B cell (primary cell): ENCODE measurements at regions of chr1 and their contacts with region 1.

Region 1: GRCh38 chr1:174800216-174800851 is 199.4 kb upstream of the CACYBP start:
- DNase-seq: no peak
- ATAC-seq: no peak
- H3K4me3 ChIP-seq: peak overlapping the region; percentile 65 to 97 (median 68)
- H3K4me3 Mint-ChIP-seq: no peak overlapping the region
- H3K27ac ChIP-seq: peak overlapping the region; percentile 78 to 88
- H3K27ac Mint-ChIP-seq: no peak overlapping the region
- H3K4me1 ChIP-seq: peaks cover 14 to 17% of the 10 kb centered on the region in 2 donors
- H3K4me1 Mint-ChIP-seq: peaks cover 14% of the 10 kb centered on the region
- H3K27me3 ChIP-seq: no peaks in the 10 kb centered on the region
- H3K27me3 Mint-ChIP-seq: no peaks in the 10 kb centered on the region
- CTCF ChIP-seq: no peak

Region 2: GRCh38 chr1:174022080-174022975 is 778.0 kb before region 1 on chr1 and contains the start of gene RC3H1:
- CTCF ChIA-PET with region 1: no interaction called
- POLR2A ChIA-PET with region 1: no interaction called
- intact Hi-C with region 1: loop called (anchors 10 kb)
- DNase-seq: peak; percentile 93
- ATAC-seq: peak; percentile 95
- H3K4me3 ChIP-seq: peak within 1 kb of the TSS; percentile 73 to 94 (median 91)
- H3K4me3 Mint-ChIP-seq: peak within 1 kb of the TSS; percentile 95
- H3K27ac ChIP-seq: peak within 1 kb of the TSS; percentile 76 to 93
- H3K27ac Mint-ChIP-seq: peak within 1 kb of the TSS; percentile 96
- H3K4me1 ChIP-seq: peaks cover 30 to 36% of the 10 kb centered on the region in 2 donors
- H3K4me1 Mint-ChIP-seq: peaks cover 41% of the 10 kb centered on the region
- H3K27me3 ChIP-seq: no peaks in the 10 kb centered on the region
- H3K27me3 Mint-ChIP-seq: no peaks in the 10 kb centered on the region
- CTCF ChIP-seq: no peak
- total RNA-seq, gene RC3H1: 84.4 and 84.5 TPM in 2 replicates

Region 3: GRCh38 chr1:174775614-174776013 is 24.7 kb before region 1 on chr1:
- CTCF ChIA-PET with region 1: interaction called, 6 read pairs
- POLR2A ChIA-PET with region 1: no interaction called
- intact Hi-C with region 1: loop called (anchors 1 kb)
- DNase-seq: no peak
- ATAC-seq: no peak
- H3K4me3 ChIP-seq: no peak overlapping the region
- H3K4me3 Mint-ChIP-seq: no peak overlapping the region
- H3K27ac ChIP-seq: no peak overlapping the region
- H3K27ac Mint-ChIP-seq: no peak overlapping the region
- H3K4me1 ChIP-seq: peaks cover 7 to 10% of the 10 kb centered on the region in 2 donors
- H3K4me1 Mint-ChIP-seq: peaks cover 28% of the 10 kb centered on the region
- H3K27me3 ChIP-seq: no peaks in the 10 kb centered on the region
- H3K27me3 Mint-ChIP-seq: no peaks in the 10 kb centered on the region
- CTCF ChIP-seq: no peak

Region 4: GRCh38 chr1:174874331-174875053 is 74.2 kb after region 1 on chr1:
- CTCF ChIA-PET with region 1: interaction called, 3 read pairs
- POLR2A ChIA-PET with region 1: interaction called, 8 read pairs
- intact Hi-C with region 1: loop called (anchors 5 kb)
- DNase-seq: peak; percentile 47
- ATAC-seq: peak; percentile 48
- H3K4me3 ChIP-seq: peak overlapping the region; percentile 30 to 68 (median 63)
- H3K4me3 Mint-ChIP-seq: peak overlapping the region; percentile 91
- H3K27ac ChIP-seq: peak overlapping the region in 1 of 2 donors; percentile 72
- H3K27ac Mint-ChIP-seq: peak overlapping the region; percentile 86
- H3K4me1 ChIP-seq: peaks cover 20 to 31% of the 10 kb centered on the region in 2 donors
- H3K4me1 Mint-ChIP-seq: peaks cover 51% of the 10 kb centered on the region
- H3K27me3 ChIP-seq: no peaks in the 10 kb centered on the region
- H3K27me3 Mint-ChIP-seq: no peaks in the 10 kb centered on the region
- CTCF ChIP-seq: no peak

Region 5: GRCh38 chr1:174968750-174969244 is 168.5 kb after region 1 on chr1:
- CTCF ChIA-PET with region 1: interaction called, 6 read pairs
- POLR2A ChIA-PET with region 1: interaction called, 9 read pairs
- intact Hi-C with region 1: loop called (anchors 5 kb)
- DNase-seq: peak; percentile 41
- ATAC-seq: peak; percentile 58
- H3K4me3 ChIP-seq: peak overlapping the region in 1 of 5 experiments; percentile 0
- H3K4me3 Mint-ChIP-seq: peak overlapping the region; percentile 82
- H3K27ac ChIP-seq: peak overlapping the region; percentile 38 to 63
- H3K27ac Mint-ChIP-seq: peak overlapping the region; percentile 90
- H3K4me1 ChIP-seq: peaks cover 47 to 55% of the 10 kb centered on the region in 2 donors
- H3K4me1 Mint-ChIP-seq: peaks cover 59% of the 10 kb centered on the region
- H3K27me3 ChIP-seq: no peaks in the 10 kb centered on the region
- H3K27me3 Mint-ChIP-seq: no peaks in the 10 kb centered on the region
- CTCF ChIP-seq: no peak